GM18951 (cell line): ENCODE measurements at regions of chr17 and their contacts with region 1.

Region 1: DNA sequence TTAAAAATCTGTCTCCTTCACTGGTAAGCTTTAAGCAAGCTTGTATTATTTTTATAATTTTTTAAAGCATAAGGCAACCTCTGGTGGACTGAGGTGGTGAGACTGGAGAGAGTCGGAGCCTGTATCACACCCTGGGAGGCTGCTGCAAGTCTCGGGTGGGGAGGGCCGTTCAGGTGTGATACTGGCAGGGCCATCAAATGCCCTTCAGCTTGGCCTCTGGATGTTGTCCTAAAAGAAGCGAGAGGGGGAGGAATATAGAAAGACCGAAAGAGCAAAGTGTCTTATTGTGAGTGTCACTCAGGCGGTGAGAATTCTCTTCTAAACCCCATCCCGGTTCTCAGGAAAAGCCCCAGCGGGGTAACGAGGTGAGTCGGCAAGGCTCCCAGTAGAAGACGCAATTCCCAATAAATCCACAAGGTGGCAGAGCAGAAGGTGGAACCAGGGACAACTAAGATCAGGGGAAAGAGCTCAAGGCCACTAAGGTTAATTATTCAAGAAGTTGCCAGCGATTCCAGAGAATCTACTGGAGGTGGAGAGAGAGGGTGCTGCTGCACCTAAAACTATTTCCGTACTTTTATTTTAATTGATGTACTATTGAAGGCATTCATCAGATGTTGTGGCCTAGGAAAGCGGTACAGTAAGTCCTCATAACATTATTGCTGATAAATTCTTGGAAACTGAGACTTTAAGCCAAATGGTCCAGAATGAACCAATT is 14.1 kb downstream of the C17orf67 start:
- POLR2A ChIP-seq: no peak

Region 2: DNA sequence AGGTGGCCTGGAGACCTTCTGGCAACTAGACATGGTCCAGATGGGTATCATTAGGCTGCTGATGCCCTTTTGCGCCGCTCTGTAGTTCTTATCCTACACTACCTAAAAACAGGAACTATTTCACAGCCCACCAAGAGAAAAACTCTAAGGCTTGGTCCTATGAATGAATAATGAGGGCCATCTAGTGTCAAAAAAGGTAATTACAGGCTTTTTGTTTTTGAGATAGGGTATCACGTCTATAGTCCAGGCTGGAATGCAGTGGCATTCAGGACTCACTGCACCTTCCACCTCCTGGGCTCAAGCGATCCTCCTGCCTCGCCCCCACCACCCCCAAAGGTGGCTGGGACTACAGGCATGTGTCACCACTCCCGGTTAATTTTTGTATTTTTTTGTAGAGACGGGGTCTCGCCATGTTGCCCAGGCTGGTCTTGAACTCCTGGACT is 120.3 kb after region 1 on chr17:
- in situ Hi-C with region 1: loop called (anchors 5 kb)
- POLR2A ChIP-seq: no peak